ENCODE measurements at regions of chr13 and their contacts with region 1.

Region 1: DNA sequence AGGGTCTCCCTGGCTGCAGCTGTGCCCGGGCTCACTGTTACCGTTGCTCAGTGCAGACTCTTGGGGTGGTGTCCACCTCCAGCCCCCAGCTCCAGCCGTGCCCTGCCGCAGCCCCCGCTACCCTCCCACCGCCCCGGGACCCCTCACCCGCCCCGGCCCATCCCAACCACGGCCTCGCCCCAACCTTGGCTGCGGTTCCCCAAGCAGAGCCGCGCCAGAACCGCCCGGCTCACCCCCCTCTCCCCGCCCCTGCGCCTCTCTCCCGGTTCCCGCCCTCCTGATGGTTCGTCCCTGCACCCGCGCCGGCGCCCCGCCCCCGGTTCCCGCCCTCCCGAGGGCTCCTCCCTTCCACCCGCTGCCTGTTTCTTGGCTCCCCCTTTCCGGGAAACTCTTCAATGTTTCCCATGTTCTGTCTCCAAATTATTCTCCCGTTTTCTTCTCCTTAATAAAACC is 40.3 kb downstream of the ANKRD10 start:
- DNase-seq: no peak
- H3K4me3 ChIP-seq: peak overlapping the region; percentile 47 to 55 (median 50)
- H3K27ac ChIP-seq: peak overlapping the region in 3 of 4 donors; percentile 35 to 56 (median 45)
- H3K4me1 ChIP-seq: peaks cover 25 to 41% (median 40%) of the 10 kb centered on the region in 4 donors
- H3K27me3 ChIP-seq: no peaks in the 10 kb centered on the region
- CTCF ChIP-seq: no peak
- EP300 ChIP-seq: no peak
- POLR2A ChIP-seq: no peak

Region 2: GRCh38 chr13:110907951-110908898 is 33.7 kb after region 1 on chr13:
- intact Hi-C with region 1: loop called (anchors 5 kb)
- DNase-seq: no peak
- H3K4me3 ChIP-seq: no peak overlapping the region
- H3K27ac ChIP-seq: peak overlapping the region; percentile 50 to 66 (median 62)
- H3K4me1 ChIP-seq: peaks cover 67 to 81% (median 79%) of the 10 kb centered on the region in 4 donors
- H3K27me3 ChIP-seq: no peaks in the 10 kb centered on the region
- CTCF ChIP-seq: no peak
- EP300 ChIP-seq: no peak
- POLR2A ChIP-seq: no peak

Measured in esophagus muscularis mucosa (tissue), 4 donors.